A549 (cell line): ENCODE measurements at regions of chr7 and their contacts with region 1.

Region 1: DNA sequence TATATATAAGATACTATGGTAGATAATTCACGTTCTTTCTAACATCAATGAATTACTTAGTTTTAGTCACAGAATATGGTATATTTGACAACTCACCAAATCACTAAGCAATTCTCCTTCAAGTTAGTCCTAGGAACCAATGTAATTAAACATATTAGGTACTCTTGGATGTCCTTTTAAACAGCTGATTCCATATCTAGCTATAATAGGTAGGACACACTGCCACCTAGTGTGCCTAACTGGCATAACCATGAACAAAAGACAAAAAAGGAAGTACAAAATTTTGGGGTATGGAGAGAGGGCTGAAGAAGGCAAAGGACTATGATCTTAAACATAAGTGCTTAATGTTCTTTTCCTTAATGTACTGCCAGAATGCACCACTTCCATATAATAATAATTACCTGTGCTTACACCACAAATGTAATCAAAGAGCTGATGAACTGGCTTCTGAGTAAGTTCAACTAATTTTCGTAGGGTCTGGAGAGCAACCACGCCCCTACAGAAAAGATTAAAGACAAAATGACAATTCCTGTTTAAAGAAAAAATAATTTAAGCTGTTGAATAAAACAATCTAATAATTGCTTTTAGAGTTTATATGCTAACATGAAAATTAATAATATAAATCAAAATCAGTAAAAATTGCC is 28.7 kb downstream of the PNPLA8 start:
- DNase-seq: peak; percentile 58 to 60
- ATAC-seq: peak; percentile 78 to 82
- H3K4me3 ChIP-seq: no peak overlapping the region
- H3K27ac ChIP-seq: no peak overlapping the region; a peak in 1 of 6 replicates
- H3K4me1 ChIP-seq: no peaks in the 10 kb centered on the region
- CTCF ChIP-seq: peak; percentile 92
- EP300 ChIP-seq: no peak
- POLR2A ChIP-seq: no peak
- RAD21 ChIP-seq: peak; percentile 83 to 91

Region 2: DNA sequence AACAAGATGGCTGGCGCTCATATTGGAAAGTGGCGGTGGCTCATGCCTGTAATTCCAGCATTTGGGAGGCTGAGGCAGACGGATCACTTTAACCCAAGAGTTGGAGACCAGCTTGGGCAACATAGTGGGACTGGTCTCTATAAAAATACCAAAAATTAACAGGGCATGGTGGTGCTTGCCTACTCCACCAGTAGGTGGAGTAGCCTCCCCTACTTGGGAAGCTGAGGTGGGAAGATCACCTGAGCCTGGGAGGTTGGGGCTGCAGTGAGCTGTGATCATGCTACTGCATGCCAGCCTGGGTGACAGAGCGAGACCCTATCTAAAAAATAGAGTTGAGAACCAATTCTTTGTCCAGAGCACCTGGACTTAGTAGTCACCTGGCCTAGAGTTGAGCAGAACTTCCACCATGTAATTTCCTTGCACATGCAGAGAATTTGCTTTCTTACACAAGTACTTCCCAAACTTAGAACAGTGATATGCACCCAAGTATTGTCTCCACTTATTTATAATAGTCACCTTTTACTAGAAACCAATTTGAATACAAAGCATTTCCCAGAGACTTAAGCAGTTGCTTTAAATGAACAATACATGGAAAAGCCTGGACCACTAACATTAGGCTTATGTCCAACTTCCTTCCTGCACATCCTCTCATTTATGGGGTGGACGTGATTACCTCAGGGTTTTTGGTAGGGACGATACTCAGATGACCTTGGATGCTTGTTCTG is 382.9 kb before region 1 on chr7:
- CTCF ChIA-PET with region 1: interaction called, 13 read pairs
- POLR2A ChIA-PET with region 1: no interaction called
- DNase-seq: peak; percentile 10 to 35
- ATAC-seq: peak; percentile 67 to 91; a peak in 4 of 6 replicates
- H3K4me3 ChIP-seq: no peak overlapping the region
- H3K27ac ChIP-seq: no peak overlapping the region
- H3K4me1 ChIP-seq: no peaks in the 10 kb centered on the region
- CTCF ChIP-seq: peak; percentile 55
- EP300 ChIP-seq: no peak
- POLR2A ChIP-seq: no peak
- RAD21 ChIP-seq: peak; percentile 57 to 81

Region 3: DNA sequence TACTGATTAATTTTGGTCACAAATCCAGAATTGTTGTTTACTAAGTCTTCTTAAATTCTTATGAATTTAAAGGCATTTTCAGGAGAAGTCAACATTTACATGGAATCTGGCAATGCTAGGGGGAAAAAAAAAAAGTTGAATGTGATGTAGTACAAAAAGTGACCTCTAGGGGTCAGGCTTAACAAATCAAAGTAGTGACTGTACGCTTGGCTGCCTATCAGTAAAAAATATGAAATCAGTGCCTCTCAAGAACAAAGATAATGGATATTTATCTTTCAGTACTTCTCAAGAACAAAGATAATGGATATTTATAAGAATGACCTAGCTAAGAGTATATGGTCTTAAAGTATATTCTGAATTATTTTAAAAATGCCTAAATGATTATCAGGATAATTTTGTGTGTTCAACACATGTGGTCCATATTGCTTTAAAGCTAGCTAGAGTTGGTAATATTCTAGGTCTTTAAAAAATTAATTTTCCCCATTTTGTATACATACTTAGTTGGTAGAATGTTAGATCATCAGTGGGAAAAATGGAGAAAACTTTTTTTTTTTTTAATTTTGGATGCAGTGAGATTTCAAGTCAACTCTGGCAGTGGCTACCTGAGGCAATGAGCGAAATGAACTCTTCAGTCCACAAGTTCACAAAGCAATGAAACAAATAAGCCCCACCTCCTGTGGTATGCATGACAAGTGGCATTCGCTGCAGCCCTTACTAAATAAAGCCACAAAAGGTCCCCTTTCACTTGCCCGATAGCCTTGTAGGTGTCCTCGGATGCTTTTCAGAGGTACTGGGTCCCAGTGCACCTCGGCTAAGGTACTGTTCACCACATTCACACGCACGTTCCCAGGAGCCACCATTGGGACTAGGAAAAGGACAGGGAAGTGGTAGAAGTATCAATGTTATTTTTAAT is 315.9 kb before region 1 on chr7:
- CTCF ChIA-PET with region 1: interaction called, 36 read pairs
- POLR2A ChIA-PET with region 1: no interaction called
- DNase-seq: peak; percentile 39 to 73
- ATAC-seq: peak; percentile 65 to 78; a peak in 5 of 6 replicates
- H3K4me3 ChIP-seq: no peak overlapping the region
- H3K27ac ChIP-seq: peak overlapping the region; percentile 62 to 63; a peak in 5 of 6 replicates
- H3K4me1 ChIP-seq: peaks cover 12% of the 10 kb centered on the region
- CTCF ChIP-seq: peak; percentile 91
- EP300 ChIP-seq: no peak
- POLR2A ChIP-seq: no peak
- RAD21 ChIP-seq: peak; percentile 92 to 93

Region 4: GRCh38 chr7:108347616-108348015 is 149.6 kb before region 1 on chr7:
- CTCF ChIA-PET with region 1: no interaction called
- POLR2A ChIA-PET with region 1: no interaction called
- DNase-seq: peak; percentile 16 to 23
- ATAC-seq: peak; percentile 65 to 78; a peak in 5 of 6 replicates
- H3K4me3 ChIP-seq: no peak overlapping the region
- H3K27ac ChIP-seq: no peak overlapping the region; a peak in 1 of 6 replicates
- H3K4me1 ChIP-seq: peaks cover 64% of the 10 kb centered on the region
- CTCF ChIP-seq: no peak
- EP300 ChIP-seq: no peak
- POLR2A ChIP-seq: no peak
- RAD21 ChIP-seq: no peak

Region 5: GRCh38 chr7:108515013-108515412 is 17.8 kb after region 1 on chr7:
- CTCF ChIA-PET with region 1: interaction called, 17 read pairs
- POLR2A ChIA-PET with region 1: no interaction called
- DNase-seq: no peak
- ATAC-seq: no peak
- H3K4me3 ChIP-seq: no peak overlapping the region
- H3K27ac ChIP-seq: no peak overlapping the region
- H3K4me1 ChIP-seq: no peaks in the 10 kb centered on the region
- CTCF ChIP-seq: no peak
- EP300 ChIP-seq: no peak
- POLR2A ChIP-seq: no peak
- RAD21 ChIP-seq: no peak

Region 6: GRCh38 chr7:108525985-108526767 is 29.0 kb after region 1 on chr7 and contains the start of gene PNPLA8:
- CTCF ChIA-PET with region 1: interaction called, 12 read pairs
- POLR2A ChIA-PET with region 1: no interaction called
- DNase-seq: peak; percentile 96 to 99
- ATAC-seq: peak; percentile 90 to 94
- H3K4me3 ChIP-seq: peak within 1 kb of the TSS; percentile 78
- H3K27ac ChIP-seq: peak within 1 kb of the TSS; percentile 81 to 83
- H3K4me1 ChIP-seq: peaks cover 10% of the 10 kb centered on the region
- CTCF ChIP-seq: no peak
- EP300 ChIP-seq: no peak
- POLR2A ChIP-seq: peak; percentile 69
- RAD21 ChIP-seq: no peak
- polyA plus RNA-seq, gene PNPLA8: 22.6 and 29.6 TPM in 2 replicates